Heart left ventricle (tissue), 16 donors: ENCODE measurements at regions of chr20 and their contacts with region 1.

Region 1: DNA sequence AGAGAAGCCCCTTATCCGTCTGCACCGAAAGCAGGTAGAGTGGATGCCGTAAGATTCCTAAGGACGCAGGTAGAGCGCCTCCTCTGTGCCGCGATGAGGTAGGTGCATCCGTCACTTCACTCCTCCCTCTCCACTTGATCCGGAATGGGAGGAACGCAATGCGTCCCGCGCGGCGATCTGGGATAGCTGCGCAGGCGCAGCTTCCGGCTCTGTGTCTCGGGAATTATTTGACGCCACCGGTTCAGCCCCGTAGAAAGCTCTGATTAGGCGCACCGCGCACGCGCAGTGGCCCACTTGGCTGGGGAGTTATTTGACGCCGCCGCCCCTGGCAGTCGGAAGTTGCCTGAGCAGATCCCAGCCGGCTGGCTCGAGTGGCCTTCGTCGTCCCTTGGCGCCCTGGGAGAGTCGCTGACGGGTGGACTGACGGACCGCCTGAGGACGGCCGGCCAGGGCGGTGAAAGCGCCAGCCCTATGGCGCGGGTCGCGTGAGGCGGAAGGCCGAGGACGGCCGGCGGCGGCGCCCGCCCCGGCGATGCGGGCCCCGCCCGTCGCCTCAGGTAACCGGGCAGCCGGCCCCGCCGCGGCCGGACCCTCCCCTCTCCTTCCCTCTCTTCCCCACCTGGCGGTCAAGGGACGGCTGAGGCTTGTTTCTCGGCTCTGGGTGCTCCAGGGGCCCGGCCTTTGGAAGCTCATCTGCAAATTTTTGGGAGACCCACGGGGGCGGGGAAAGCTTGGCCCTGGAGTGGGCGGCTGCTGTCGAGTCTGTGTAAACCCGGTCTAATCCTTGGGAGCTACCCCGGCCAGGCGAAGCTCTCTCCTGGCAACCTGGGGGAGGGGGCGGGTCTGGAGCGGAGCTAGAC is at the start of gene RALGAPB:
- DNase-seq: peak; percentile 99 to 100 (median 99)
- ATAC-seq: peak; percentile 93 to 99 (median 96)
- H3K4me3 ChIP-seq: peak within 1 kb of the TSS; percentile 64 to 95 (median 84)
- H3K27ac ChIP-seq: peak within 1 kb of the TSS; percentile 70 to 94 (median 88)
- H3K4me1 ChIP-seq: peaks cover 0 to 42% (median 22%) of the 10 kb centered on the region in 12 donors
- H3K27me3 ChIP-seq: no peaks in the 10 kb centered on the region
- CTCF ChIP-seq: peak in 9 of 12 donors; percentile 29 to 62 (median 45)
- POLR2A ChIP-seq: peak in 1 of 2 donors; percentile 66
- total RNA-seq, gene RALGAPB: 19.7 to 31.4 (median 26.2) TPM

Region 2: DNA sequence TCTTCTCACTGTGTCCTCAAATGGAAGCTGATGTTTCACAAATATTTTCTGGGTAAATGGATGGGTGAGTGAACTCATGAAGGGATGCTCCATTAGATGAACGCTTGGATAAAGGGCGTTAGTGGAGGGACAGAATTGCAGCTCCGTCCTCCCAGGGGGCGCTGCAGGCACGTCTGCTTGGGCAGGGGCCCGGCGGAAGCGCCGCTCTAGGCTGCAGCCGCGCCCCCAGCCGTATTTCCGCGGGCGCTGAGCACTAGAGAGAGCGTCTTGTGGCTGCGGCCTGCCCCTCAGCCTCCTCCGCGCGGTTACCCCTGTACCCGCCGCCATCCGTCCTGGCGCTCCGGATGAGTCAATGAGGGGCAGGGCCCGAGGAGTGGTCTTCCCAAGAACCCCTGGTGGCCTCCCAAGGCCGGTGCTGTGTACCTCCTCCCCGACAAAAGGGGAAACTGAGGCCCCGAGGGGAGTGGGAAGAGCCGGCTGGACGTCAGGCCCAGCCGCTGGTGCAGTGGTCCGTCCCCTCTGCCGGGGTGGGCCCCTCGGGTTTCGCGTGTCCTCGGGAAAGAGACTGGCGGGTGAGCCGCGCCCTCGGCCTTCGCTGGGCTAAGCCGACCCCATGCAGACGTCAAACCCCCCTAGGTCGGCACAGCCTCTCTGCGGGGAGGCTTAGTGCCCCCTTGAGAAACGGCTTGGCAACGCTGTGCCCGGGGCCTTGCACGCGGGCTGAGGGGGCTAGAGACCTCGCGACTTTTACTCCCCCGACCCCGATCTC is 26.1 kb before region 1 on chr20:
- intact Hi-C with region 1: loop called in 1 of 10 experiments (anchors 1 kb)
- DNase-seq: peak; percentile 92 to 96 (median 94)
- ATAC-seq: peak; percentile 84 to 95 (median 94)
- H3K4me3 ChIP-seq: peak overlapping the region; percentile 67 to 99 (median 87)
- H3K27ac ChIP-seq: peak overlapping the region; percentile 57 to 94 (median 85)
- H3K4me1 ChIP-seq: peaks cover 0 to 24% (median 11%) of the 10 kb centered on the region in 12 donors
- H3K27me3 ChIP-seq: no peaks in the 10 kb centered on the region
- CTCF ChIP-seq: peak; percentile 92 to 99 (median 96)
- POLR2A ChIP-seq: peak in 1 of 2 donors; percentile 76

Region 3: GRCh38 chr20:38536310-38536709 is 63.6 kb after region 1 on chr20:
- intact Hi-C with region 1: no loop called
- DNase-seq: no peak
- ATAC-seq: no peak
- H3K4me3 ChIP-seq: no peak overlapping the region
- H3K27ac ChIP-seq: no peak overlapping the region
- H3K4me1 ChIP-seq: no peaks in the 10 kb centered on the region
- H3K27me3 ChIP-seq: no peaks in the 10 kb centered on the region
- CTCF ChIP-seq: no peak
- POLR2A ChIP-seq: no peak